ENCODE measurements at regions of chr11 and their contacts with region 1.

Region 1: DNA sequence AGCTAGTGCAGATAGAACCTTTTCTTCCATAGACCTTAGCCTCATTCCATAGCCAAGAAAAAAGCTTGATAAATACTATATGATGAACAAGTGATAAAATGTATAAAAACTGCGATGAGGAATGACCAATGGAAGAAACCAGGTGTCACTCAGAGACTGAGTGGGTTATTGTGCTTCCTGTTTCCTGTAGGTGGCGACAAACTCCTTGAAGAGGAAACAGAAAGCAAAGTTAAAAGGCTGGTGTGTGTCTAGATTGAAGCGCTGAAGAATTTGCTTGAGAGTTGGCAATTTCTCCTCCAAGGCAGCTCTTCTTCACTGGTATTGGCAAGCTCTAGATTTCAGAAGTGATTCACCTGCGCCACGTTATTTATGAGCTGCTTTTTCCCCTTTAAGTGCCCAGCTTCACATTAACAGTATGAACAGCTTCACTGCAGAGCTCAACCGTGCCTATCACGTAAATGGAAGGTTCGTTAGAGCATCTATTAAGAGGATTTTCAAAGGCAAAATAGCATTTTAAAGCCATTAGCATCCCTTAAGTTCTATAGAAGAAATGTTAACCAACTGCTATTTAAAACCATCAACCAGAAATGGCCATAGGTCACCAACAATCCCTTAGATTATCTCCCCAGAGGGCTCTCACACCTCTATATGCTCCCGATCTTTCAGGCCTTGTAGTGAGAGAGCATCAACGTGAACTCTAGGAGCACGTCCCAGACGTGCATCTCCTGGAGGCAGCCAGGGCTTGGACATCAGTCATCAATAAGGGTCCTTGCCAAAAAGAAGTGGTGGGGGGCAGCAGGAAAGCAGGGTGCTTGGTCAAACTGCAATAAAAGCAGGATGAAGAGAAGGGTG is 179.4 kb downstream of the CADM1 start:
- DNase-seq: no peak
- H3K4me3 ChIP-seq: peak overlapping the region in 1 of 4 donors; percentile 39
- H3K27ac ChIP-seq: no peak overlapping the region
- H3K4me1 ChIP-seq: peaks cover 0 to 10% (median 0%) of the 10 kb centered on the region in 3 donors
- H3K27me3 ChIP-seq: no peaks in the 10 kb centered on the region
- CTCF ChIP-seq: peak; percentile 56 to 83 (median 67)
- POLR2A ChIP-seq: no peak

Region 2: GRCh38 chr11:115391598-115391997 is 66.8 kb after region 1 on chr11:
- intact Hi-C with region 1: no loop called
- DNase-seq: no peak
- H3K4me3 ChIP-seq: no peak overlapping the region
- H3K27ac ChIP-seq: no peak overlapping the region
- H3K4me1 ChIP-seq: no peaks in the 10 kb centered on the region
- H3K27me3 ChIP-seq: no peaks in the 10 kb centered on the region
- CTCF ChIP-seq: no peak
- POLR2A ChIP-seq: no peak

Region 3: GRCh38 chr11:116276051-116277044 is 951.5 kb after region 1 on chr11:
- intact Hi-C with region 1: loop called (anchors 5 kb)
- DNase-seq: no peak
- H3K4me3 ChIP-seq: peak overlapping the region in 2 of 4 donors; percentile 13 to 58
- H3K27ac ChIP-seq: no peak overlapping the region
- H3K4me1 ChIP-seq: peaks cover 0 to 8% (median 3%) of the 10 kb centered on the region in 3 donors
- H3K27me3 ChIP-seq: peaks cover 0 to 27% (median 0%) of the 10 kb centered on the region in 4 donors
- CTCF ChIP-seq: peak; percentile 68 to 98 (median 89)
- POLR2A ChIP-seq: no peak